ENCODE measurements at regions of chr5 and their contacts with region 1.

Region 1: DNA sequence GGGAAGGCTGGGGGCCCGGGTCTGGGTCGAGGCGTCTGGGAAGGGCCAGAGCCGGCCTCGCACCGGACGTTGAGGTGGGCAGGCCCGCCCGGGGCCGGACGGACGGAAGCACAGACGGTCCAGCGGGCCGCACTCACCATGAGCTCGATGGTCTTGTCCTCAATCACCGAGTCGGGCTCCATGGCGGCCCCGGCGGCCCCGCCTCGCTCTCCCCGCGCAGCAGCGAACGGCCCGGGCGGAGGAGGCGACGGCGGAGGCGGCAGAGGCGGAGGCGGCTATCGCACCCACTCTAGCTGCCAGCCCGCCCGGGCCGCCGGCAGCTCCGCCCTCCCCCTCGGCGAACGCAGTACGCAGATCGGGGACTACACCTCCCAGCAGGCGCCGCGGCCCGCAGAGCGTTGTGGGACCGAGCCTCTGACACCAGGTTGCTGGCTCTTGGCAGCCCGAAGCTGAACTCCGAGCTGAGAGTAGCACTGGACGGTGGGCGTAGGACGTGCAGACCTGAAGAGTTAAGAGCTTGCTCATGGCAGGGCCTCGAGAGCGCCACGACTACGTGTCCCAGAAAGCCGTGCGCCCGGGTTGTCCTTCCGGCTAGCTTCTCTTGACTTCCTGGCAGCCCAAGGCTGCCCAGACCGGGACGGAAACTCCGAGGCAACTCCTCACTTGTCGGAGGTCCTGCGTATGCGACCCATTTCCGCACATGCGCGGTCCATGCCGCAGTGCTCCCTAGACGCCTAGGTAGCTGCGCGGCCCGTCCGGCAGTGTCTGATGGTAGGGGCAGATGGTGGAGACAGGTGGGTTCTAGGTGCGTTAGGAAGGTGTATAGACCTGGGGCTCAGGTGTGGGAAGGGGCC is at the start of gene FBXW11:
- DNase-seq: peak; percentile 98

Region 2: GRCh38 chr5:171840066-171840465 is 166.5 kb before region 1 on chr5:
- CTCF ChIA-PET with region 1: no interaction called
- POLR2A ChIA-PET with region 1: no interaction called
- DNase-seq: peak; percentile 36

Region 3: DNA sequence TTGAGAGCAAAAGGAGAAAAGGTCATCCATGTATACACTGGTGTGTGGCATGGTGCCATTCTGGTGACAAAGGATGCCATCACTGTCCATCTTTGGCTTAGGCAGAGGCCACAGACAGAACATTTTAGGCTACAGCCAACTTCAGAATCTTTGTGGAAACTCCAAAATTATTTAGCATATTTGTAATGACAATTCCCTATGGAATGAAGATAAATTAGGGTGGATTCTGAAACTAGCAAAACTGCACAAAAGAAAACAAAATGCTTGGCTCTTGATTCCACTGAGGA is 92.6 kb before region 1 on chr5:
- CTCF ChIA-PET with region 1: interaction called, 22 read pairs
- POLR2A ChIA-PET with region 1: interaction called, 29 read pairs
- DNase-seq: no peak

Region 4: GRCh38 chr5:171920765-171921391 is 85.7 kb before region 1 on chr5:
- CTCF ChIA-PET with region 1: no interaction called
- POLR2A ChIA-PET with region 1: interaction called, 29 read pairs
- DNase-seq: no peak

Region 5: GRCh38 chr5:171945066-171945465 is 61.5 kb before region 1 on chr5:
- CTCF ChIA-PET with region 1: no interaction called
- POLR2A ChIA-PET with region 1: interaction called, 16 read pairs
- DNase-seq: no peak

Region 6: DNA sequence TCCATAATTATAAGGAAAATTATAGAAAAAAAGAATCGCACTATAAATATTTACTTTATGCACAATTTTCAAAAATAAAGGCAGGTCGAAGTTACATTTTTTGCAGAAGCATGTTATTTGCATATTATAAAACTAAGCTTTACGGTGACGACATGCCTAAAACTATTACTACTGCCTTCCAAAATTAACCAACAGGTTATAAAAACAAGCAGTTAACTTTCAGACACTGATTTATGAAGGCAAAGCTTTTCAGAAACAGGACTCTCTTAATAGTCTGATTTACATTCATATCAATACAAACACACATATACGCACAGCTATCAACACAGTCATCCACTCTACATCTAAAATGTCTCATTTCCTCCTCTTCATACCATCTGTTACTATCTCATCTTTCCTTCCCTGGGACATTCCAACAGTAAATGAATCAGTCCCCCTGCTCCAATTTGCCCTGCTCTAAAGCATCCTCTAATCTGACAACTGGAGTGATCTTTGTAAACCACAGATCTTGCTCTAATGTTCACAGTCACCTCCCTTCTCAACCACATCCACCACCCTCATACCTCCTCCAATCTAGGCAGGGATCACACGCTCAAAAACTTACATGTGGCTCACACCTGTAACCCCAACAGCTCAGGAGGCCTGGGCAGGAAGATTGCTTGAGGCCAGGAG is 21.7 kb before region 1 on chr5:
- CTCF ChIA-PET with region 1: no interaction called
- POLR2A ChIA-PET with region 1: interaction called, 27 read pairs
- DNase-seq: no peak

Region 7: DNA sequence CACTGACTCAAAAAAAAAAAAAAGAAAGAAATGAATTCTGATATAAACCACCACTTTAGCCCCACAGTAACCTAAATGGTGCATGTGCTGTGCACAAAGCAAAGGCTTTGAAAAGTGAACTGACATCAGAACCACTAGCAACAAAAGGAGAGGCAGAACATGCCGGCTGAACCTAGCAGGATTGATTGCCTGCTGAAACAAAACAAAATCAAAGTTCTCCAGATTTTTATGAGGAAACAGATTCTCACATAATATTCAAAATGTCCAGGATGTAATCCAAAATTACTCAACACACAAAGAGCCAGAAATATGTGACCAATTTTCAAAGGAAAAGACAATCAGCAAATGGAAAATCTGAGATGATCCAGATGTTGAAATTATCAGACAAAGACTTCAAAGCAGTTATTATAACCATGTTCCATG is 239.2 kb after region 1 on chr5:
- CTCF ChIA-PET with region 1: no interaction called
- POLR2A ChIA-PET with region 1: no interaction called
- DNase-seq: no peak

Measured in HEK293T (cell line).